Dorsolateral prefrontal cortex (tissue), 120 donors: ENCODE measurements at regions of chr19 and their contacts with region 1.

Region 1: GRCh38 chr19:33430674-33431277 is 57.3 kb downstream of the CEBPG start:
- DNase-seq: peak; percentile 74 to 84 (median 76)
- H3K4me3 ChIP-seq: peak overlapping the region in 5 of 59 donors; percentile 3 to 19 (median 9)
- H3K27ac ChIP-seq: peak overlapping the region in 18 of 59 donors; percentile 9 to 69 (median 38)
- H3K27me3 ChIP-seq: no peaks in the 10 kb centered on the region
- CTCF ChIP-seq: peak; percentile 35 to 91 (median 82)

Region 2: DNA sequence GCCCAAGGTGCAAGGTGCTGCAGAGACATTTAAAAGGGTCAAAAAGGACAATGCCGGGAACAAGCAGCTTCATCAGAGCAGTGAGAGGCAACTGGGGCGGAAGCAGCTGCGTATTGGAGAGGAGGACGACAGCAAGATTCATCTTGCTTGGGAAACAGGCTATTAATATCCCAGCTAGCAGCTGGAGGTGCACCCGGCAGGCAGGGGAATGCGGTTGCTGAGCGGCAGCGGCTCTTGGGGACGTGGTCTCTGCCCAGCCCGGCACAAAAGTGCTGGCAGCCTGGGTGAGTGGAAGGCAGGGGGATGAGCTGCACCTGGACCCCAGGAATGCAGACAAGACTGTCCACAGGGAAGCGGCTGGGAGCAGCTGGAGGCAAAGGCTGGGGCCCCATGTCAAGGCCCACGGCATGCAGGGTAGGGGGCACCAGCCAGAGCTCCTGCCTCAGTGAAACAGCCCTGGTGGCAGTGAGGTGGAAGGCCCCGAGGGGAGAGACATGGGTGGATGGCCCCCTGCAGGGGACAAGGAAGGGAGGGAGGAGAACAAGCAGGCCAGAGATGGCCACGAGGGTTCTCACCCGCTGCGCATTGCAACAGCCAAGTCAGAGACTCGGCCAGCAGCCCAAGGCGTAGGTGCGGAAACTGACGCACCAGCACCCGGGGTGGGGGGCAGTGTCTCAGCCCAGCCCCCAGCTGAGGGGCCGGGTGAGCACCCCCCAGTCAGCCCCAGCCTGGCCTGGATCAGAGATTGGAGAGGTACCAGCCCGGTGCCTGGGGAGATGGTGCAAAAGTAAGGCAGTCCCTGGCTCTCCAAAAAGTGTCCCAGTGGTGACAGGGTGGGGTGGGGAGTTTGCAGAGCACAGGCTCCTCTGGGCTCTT is 56.4 kb after region 1 on chr19:
- intact Hi-C with region 1: no loop called
- DNase-seq: peak in 6 of 10 donors; percentile 20 to 57 (median 44)
- H3K4me3 ChIP-seq: peak overlapping the region in 28 of 59 donors; percentile 1 to 52 (median 22)
- H3K27ac ChIP-seq: peak overlapping the region in 28 of 59 donors; percentile 21 to 76 (median 54)
- H3K27me3 ChIP-seq: no peaks in the 10 kb centered on the region
- CTCF ChIP-seq: no peak

Region 3: DNA sequence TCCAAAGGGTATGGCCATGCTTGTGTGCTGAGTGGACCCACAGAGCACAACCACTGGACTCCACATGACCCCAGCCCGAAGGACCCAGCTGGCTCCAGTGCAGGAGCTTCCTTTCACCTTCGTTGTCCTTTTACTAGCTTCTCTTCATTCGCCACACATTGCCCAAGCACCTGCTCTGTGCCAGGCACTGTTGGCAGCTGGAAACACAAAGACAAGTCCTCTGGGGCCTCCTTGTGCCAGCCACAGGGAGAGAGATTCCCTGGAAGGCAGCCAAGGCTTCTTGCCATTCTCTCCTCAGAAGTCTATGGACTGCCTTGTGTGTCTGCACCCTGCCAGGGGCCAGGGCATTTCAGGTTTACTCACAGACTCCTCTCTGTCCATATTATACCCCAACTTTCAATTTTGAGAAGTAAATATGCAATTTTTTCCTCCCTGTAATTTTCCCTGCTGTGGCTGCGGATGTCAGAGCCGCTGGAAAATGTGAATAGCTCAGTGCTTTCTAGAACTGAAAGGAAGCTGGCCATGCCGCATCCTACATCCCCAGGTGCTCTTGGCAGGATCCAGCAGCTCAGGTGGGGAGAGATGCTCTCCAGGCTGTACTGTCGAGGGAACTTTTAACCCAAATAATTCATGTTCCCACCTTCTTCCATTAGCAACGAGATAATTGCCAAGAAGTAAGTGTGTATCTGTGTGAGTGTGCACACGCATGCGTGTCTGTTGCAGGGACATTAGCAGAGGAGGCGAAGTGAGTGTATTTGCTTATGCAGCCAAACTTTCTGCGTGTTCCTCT is 248.2 kb after region 1 on chr19:
- intact Hi-C with region 1: loop called in 1 of 2 experiments (anchors 10 kb)
- DNase-seq: peak in 9 of 10 donors; percentile 35 to 61 (median 51)
- H3K4me3 ChIP-seq: peak overlapping the region in 1 of 59 donors; percentile 31
- H3K27ac ChIP-seq: no peak overlapping the region
- H3K27me3 ChIP-seq: peaks cover 0 to 16% (median 0%) of the 10 kb centered on the region in 45 donors
- CTCF ChIP-seq: peak in 1 of 56 donors; percentile 11